AG04449 (cell line): ENCODE measurements at regions of chr7 and their contacts with region 1.

Region 1: GRCh38 chr7:76129366-76129765 is 72.3 kb upstream of the SRRM3 start:
- DNase-seq: no peak
- H3K4me3 ChIP-seq: no peak overlapping the region
- CTCF ChIP-seq: no peak

Region 2: DNA sequence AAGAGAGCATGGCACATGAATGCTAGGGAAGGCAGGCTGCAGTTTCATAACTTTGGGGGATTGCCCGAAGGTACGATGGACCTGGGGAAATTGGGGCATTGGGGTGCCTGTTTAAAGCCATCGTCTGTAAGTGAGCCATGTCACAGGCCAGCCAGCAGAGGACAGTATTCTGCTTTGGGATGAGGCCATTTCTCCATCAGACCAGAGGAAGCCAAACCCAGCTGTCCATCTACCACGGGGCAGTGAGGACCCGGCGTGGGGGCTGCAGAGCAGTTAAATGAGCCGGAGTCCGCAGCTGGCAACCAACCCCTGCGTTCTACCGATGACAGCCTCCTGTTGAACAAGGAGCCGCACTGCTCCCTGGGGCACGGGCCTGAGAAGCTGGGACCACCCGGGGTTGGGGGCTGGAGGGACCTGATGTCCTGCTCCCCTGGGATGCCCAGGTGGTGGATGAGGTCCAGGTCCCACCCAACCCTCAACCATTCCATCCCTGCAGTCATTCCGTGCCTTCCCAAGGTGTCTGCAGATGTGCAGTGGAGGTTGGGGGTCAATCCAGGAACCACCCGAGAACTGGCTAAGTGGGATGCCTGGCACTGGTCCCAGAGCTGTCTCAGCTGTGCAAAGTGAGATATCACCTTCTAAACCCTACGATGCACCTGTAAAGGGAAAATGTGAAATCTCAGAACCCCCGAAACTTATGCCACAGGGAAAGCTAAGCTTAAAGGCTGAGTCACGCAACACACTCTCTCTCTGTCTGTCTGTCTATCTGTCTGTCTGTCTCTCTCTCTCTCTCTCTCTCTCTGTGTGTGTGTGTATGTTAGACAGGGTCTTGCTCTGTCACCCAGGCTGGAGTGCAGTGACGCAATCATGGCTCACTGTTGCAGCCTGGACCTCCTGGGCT is 262.6 kb before region 1 on chr7:
- CTCF ChIA-PET with region 1: interaction called, 16 read pairs
- POLR2A ChIA-PET with region 1: no interaction called
- DNase-seq: no peak
- H3K4me3 ChIP-seq: no peak overlapping the region
- CTCF ChIP-seq: peak; percentile 94

Region 3: GRCh38 chr7:76047811-76048667 is 81.3 kb before region 1 on chr7 and contains the starts of genes MDH2 and STYXL1:
- CTCF ChIA-PET with region 1: interaction called, 10 read pairs
- POLR2A ChIA-PET with region 1: interaction called, 4 read pairs
- DNase-seq: peak; percentile 63
- H3K4me3 ChIP-seq: peak within 1 kb of the TSS; percentile 94
- CTCF ChIP-seq: no peak

Region 4: DNA sequence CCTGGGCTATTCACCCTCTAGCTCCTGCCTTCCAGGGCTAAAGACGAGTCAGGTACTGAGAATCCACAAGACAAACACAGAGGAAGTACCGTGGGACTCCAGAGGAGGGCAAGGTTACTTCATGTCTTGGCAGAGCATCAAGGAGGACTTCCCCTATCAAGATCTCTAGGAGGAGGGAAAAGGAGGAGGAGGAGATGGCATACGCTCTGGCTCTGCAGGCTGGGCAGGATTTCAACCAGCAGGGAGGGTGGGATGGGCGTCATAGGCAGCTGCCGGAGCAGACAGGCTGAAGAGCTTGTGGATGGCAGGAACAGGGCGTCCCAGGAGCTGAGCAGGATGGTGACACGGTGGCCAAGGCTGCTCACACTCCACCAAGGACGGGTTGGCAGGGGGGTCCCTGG is 60.1 kb before region 1 on chr7:
- CTCF ChIA-PET with region 1: interaction called, 46 read pairs
- POLR2A ChIA-PET with region 1: no interaction called
- DNase-seq: peak; percentile 89
- H3K4me3 ChIP-seq: no peak overlapping the region
- CTCF ChIP-seq: peak; percentile 47